Ascending aorta (tissue), 2 donors: ENCODE measurements at regions of chr7 and their contacts with region 1.

Region 1: GRCh38 chr7:77331938-77332695 is 84.0 kb downstream of the GSAP start:
- DNase-seq: peak in 1 of 2 donors; percentile 86
- H3K4me3 ChIP-seq: no peak overlapping the region
- H3K27ac ChIP-seq: peak overlapping the region in 1 of 2 donors; percentile 76
- H3K4me1 ChIP-seq: peaks cover 25 to 43% of the 10 kb centered on the region in 2 donors
- H3K27me3 ChIP-seq: no peaks in the 10 kb centered on the region
- CTCF ChIP-seq: peak; percentile 58 to 80 (median 75)

Region 2: DNA sequence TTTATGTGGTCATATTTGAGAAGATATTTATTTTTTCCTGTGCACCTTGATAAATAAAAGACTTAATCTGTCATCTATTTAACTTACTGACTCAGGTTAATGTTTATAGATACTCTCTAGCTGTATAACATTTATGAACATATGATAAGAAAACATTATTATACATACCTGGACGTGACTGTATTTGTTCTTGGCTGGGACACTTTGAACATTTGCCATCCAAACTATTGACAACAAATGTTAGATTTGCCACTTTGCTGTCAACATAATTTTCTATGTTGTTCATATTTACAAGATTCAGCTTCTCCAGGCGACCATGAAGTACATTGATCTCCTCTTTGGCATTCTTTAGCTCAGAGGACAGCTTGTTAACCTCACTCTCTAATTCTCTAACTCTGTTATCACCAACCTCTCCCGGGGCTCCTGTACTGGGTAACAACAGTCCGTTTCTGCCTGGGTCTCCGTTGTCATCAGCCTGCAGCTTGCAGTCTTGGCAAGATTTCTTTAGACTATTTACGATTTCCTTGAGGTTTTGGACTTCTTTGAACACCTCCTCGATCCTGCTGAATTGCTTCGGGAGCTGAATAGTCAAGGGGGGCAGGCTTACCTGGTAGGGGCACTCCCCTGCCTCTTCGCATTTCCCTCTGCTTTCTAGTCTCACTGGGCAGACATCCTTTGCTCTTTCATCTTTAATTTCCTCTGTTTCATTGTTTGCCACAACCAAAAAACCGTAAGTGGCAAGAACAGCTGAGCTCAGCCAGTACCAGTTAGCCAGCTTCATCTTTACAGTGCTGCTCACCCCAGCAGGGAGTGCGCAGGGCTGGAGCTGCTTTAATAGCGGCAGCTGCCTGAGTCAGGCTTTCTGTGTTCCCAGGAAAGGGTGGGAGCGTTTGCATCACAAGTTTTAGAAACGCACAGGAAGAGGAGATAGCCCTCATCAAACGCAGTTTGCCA is 132.8 kb before region 1 on chr7 and contains the start of gene FGL2:
- intact Hi-C with region 1: loop called (anchors 5 kb)
- DNase-seq: peak; percentile 56 to 92
- H3K4me3 ChIP-seq: peak within 1 kb of the TSS; percentile 57 to 74
- H3K27ac ChIP-seq: peak within 1 kb of the TSS; percentile 73 to 82
- H3K4me1 ChIP-seq: peaks cover 0 to 11% of the 10 kb centered on the region in 2 donors
- H3K27me3 ChIP-seq: no peaks in the 10 kb centered on the region
- CTCF ChIP-seq: no peak
- total RNA-seq, gene FGL2: 77.9 TPM

Region 3: GRCh38 chr7:77252506-77252905 is 79.6 kb before region 1 on chr7:
- intact Hi-C with region 1: loop called (anchors 2 kb)
- DNase-seq: no peak
- H3K4me3 ChIP-seq: no peak overlapping the region
- H3K27ac ChIP-seq: peak overlapping the region in 1 of 2 donors; percentile 59
- H3K4me1 ChIP-seq: peaks cover 0 to 2% of the 10 kb centered on the region in 2 donors
- H3K27me3 ChIP-seq: no peaks in the 10 kb centered on the region
- CTCF ChIP-seq: no peak

Region 4: DNA sequence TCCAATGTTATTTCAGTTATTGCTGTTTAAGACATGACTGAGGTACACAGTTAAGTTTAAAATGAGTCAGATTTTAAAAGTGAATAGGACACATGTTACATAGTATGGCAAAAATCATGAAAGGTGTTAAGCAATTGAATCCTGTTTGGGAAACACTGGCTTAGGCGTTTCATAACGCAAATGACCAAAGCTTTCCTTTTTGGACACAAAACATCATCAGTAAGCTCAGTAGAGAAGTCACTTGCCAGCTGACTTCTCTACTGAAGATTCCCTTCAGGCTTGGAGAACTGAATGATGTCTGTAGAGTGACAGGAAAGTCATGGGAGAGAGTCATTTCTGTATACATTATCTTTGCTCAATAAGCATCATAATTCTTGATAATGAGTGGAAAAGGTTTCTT is 299.7 kb after region 1 on chr7:
- intact Hi-C with region 1: no loop called
- DNase-seq: no peak
- H3K4me3 ChIP-seq: no peak overlapping the region
- H3K27ac ChIP-seq: no peak overlapping the region
- H3K4me1 ChIP-seq: no peaks in the 10 kb centered on the region
- H3K27me3 ChIP-seq: no peaks in the 10 kb centered on the region
- CTCF ChIP-seq: no peak